PC-9 (cell line): ENCODE measurements at regions of chr12 and their contacts with region 1.

Region 1: DNA sequence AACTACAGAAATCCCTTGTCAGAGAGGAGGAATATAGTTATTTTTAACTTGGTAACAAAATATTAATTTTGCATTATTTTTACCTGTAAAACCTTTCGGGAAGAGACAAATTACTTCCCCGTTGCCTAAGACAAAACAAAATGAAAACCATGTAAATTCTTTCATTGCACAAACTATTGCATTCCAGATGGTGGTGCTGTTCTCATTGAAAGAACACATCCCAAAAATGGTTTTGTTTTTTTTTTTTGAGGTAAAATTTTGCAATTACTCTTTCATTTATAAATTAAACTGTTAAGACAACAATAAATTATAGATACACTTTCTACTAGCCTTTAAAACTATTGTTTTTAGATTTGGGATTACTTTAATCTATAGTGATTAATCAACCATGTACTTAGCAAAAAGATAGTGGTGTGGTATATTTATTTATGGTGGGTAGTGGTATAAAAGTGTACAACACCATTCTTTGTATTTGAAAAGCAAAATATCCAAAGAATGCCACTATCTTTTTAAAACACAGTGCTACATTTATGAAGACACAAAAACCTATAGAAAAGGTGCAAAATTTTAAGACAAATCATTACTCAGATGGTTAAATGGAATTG is 115.5 kb downstream of the SLC38A1 start:
- DNase-seq: peak in 1 of 2 experiments; percentile 35
- H3K4me3 ChIP-seq: no peak overlapping the region
- H3K27ac ChIP-seq: no peak overlapping the region
- H3K4me1 ChIP-seq: peaks cover 19% of the 10 kb centered on the region
- H3K27me3 ChIP-seq: no peaks in the 10 kb centered on the region
- CTCF ChIP-seq: peak; percentile 77

Region 2: DNA sequence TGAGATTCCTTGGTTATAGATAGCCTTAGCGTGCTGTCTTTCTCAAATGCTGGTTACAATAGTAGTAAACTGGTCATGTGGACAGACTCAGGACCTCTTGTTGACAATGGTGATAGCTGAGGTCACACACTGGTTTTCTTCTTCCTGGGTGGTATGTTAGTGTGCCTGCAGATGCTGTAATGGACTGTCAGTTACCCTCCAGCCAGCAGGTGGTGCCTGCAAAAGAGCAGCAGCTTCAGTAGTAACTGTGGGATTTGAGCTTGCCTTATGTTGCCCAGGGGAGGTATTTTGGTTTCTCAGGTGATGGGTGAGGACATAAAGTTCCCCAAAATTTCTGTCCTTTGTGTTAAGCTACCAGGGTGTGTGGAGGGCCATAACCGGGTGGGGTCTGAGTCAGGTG is 129.3 kb before region 1 on chr12:
- CTCF ChIA-PET with region 1: no interaction called
- POLR2A ChIA-PET with region 1: no interaction called
- intact Hi-C with region 1: no loop called
- DNase-seq: no peak
- H3K4me3 ChIP-seq: no peak overlapping the region
- H3K27ac ChIP-seq: no peak overlapping the region
- H3K4me1 ChIP-seq: no peaks in the 10 kb centered on the region
- H3K27me3 ChIP-seq: no peaks in the 10 kb centered on the region
- CTCF ChIP-seq: no peak

Region 3: DNA sequence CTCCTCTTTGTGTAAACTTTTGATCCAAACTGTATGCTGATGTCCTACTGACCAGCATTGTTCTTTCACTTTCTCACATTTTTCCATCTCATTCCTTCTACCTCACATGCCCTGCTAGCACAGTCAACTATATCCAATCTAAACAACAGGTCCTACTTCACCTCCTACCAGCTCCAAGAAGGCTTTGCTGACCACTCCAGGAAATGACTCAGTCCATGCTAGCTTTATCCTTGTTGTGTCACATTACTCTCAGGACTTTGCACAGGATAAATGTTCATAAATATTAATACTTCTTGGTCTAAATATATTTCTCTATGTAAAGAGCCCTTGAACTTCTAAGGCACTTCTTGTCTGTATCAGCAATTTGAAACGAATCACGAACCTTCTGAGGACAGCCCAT is 861.1 kb after region 1 on chr12:
- CTCF ChIA-PET with region 1: no interaction called
- POLR2A ChIA-PET with region 1: no interaction called
- intact Hi-C with region 1: loop called (anchors 10 kb)
- DNase-seq: peak in 1 of 2 experiments; percentile 42
- H3K4me3 ChIP-seq: no peak overlapping the region
- H3K27ac ChIP-seq: peak overlapping the region; percentile 14; the same call in 1 of the 2 replicates
- H3K4me1 ChIP-seq: peaks cover 27% of the 10 kb centered on the region
- H3K27me3 ChIP-seq: no peaks in the 10 kb centered on the region
- CTCF ChIP-seq: no peak